ENCODE measurements at regions of chr1 and their contacts with region 1.

Region 1: GRCh38 chr1:94025383-94026340 is 95.3 kb downstream of the ABCA4 start:
- DNase-seq: peak; percentile 20
- ATAC-seq: peak; percentile 77
- H3K4me3 ChIP-seq: no peak overlapping the region
- H3K27ac ChIP-seq: no peak overlapping the region
- H3K4me1 ChIP-seq: no peaks in the 10 kb centered on the region
- H3K27me3 ChIP-seq: peaks cover 0 to 1% of the 10 kb centered on the region in 2 experiments; a peak in 2 of 4 replicates
- CTCF ChIP-seq: peak; percentile 52 to 73 (median 63); a peak in 5 of 6 replicates
- EP300 ChIP-seq: no peak
- POLR2A ChIP-seq: no peak
- RAD21 ChIP-seq: peak; percentile 83

Region 2: DNA sequence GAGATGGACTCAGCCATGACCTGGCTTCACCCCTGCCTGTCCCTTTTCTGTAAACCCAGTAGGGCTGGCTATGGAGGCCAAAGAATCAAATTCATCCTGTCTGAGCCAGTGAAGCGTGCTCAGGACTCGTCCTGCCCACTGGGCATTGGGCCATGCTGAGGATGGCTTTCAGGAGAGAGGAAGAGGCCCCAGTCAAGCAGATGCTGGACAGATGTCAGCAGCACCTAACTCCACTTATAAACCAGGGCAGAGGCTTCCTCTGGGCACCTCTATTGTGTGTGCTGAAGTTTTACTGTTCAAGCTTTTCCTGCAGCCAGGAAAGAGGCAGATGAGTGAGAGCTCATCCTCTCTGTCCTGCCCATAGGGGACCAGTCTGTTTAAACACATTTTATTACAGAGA is 19.1 kb before region 1 on chr1:
- CTCF ChIA-PET with region 1: interaction called, 12 read pairs
- POLR2A ChIA-PET with region 1: no interaction called
- RAD21 ChIA-PET with region 1: no interaction called
- SMC1A ChIA-PET with region 1: no interaction called
- in situ Hi-C with region 1: no loop called
- intact Hi-C with region 1: no loop called
- DNase-seq: no peak
- ATAC-seq: no peak
- H3K4me3 ChIP-seq: no peak overlapping the region
- H3K27ac ChIP-seq: no peak overlapping the region
- H3K4me1 ChIP-seq: no peaks in the 10 kb centered on the region
- H3K27me3 ChIP-seq: no peaks in the 10 kb centered on the region; a peak in 2 of 4 replicates
- CTCF ChIP-seq: no peak
- EP300 ChIP-seq: no peak
- POLR2A ChIP-seq: no peak
- RAD21 ChIP-seq: no peak

Region 3: GRCh38 chr1:94039514-94039870 is 13.8 kb after region 1 on chr1:
- CTCF ChIA-PET with region 1: interaction called, 152 read pairs
- POLR2A ChIA-PET with region 1: interaction called, 3 read pairs
- RAD21 ChIA-PET with region 1: interaction called, 6 read pairs
- SMC1A ChIA-PET with region 1: interaction called, 33 read pairs
- in situ Hi-C with region 1: no loop called
- intact Hi-C with region 1: no loop called
- DNase-seq: no peak
- ATAC-seq: peak; percentile 65
- H3K4me3 ChIP-seq: no peak overlapping the region
- H3K27ac ChIP-seq: no peak overlapping the region
- H3K4me1 ChIP-seq: peaks cover 6% of the 10 kb centered on the region; the same call in 1 of the 2 replicates
- H3K27me3 ChIP-seq: no peaks in the 10 kb centered on the region; a peak in 1 of 4 replicates
- CTCF ChIP-seq: peak; percentile 78 to 92 (median 86)
- EP300 ChIP-seq: no peak
- POLR2A ChIP-seq: no peak
- RAD21 ChIP-seq: peak; percentile 53

Region 4: GRCh38 chr1:94045465-94046056 is 19.9 kb after region 1 on chr1:
- CTCF ChIA-PET with region 1: interaction called, 152 read pairs
- POLR2A ChIA-PET with region 1: no interaction called
- RAD21 ChIA-PET with region 1: interaction called, 3 read pairs
- SMC1A ChIA-PET with region 1: no interaction called
- in situ Hi-C with region 1: no loop called
- intact Hi-C with region 1: no loop called
- DNase-seq: no peak
- ATAC-seq: peak; percentile 73
- H3K4me3 ChIP-seq: no peak overlapping the region
- H3K27ac ChIP-seq: no peak overlapping the region
- H3K4me1 ChIP-seq: no peaks in the 10 kb centered on the region
- H3K27me3 ChIP-seq: no peaks in the 10 kb centered on the region; a peak in 1 of 4 replicates
- CTCF ChIP-seq: peak; percentile 33 to 65 (median 45)
- EP300 ChIP-seq: no peak
- POLR2A ChIP-seq: no peak
- RAD21 ChIP-seq: peak; percentile 45

Region 5: DNA sequence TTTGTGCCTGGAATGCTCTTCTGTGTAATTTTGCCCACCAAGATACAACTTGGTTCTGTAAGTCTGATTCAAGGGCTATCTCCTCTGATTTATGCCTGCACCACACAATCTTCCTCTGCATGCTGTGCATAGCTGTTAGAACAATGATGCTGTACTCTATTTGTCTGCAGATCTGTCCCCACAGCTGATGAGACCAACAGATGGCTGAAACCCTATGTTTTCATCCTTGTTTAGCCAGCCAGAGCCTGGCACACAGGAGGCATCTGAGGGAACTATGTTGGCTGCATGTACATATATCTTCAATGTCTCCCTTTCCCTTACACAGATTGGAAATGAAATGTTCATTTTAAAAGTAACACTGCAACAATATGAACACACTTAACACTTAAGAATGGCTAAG is 153.2 kb after region 1 on chr1:
- CTCF ChIA-PET with region 1: no interaction called
- POLR2A ChIA-PET with region 1: no interaction called
- RAD21 ChIA-PET with region 1: no interaction called
- SMC1A ChIA-PET with region 1: no interaction called
- in situ Hi-C with region 1: no loop called
- intact Hi-C with region 1: no loop called
- DNase-seq: no peak
- ATAC-seq: no peak
- H3K4me3 ChIP-seq: no peak overlapping the region
- H3K27ac ChIP-seq: no peak overlapping the region
- H3K4me1 ChIP-seq: no peaks in the 10 kb centered on the region
- H3K27me3 ChIP-seq: no peaks in the 10 kb centered on the region; a peak in 2 of 4 replicates
- CTCF ChIP-seq: no peak
- EP300 ChIP-seq: no peak
- POLR2A ChIP-seq: no peak
- RAD21 ChIP-seq: no peak

Region 6: DNA sequence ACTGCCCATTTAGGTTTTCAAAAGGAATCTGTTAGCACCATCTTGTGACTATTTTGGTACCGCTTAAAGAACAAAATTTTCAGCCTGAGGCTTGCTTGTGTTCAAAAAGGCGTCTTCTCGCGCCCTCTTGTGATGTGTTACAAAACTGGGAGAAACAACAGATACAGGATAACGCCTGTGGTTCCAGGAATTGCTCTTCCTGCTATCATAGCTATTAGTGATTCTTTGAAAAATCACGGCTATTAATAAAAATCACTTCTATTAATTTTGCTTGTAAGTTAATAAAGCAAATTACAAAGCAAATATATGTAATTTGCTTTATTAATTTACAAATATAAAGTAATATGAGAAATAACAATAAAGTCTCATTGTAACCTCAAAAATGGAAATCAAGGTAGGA is 310.3 kb after region 1 on chr1:
- CTCF ChIA-PET with region 1: interaction called, 86 read pairs
- POLR2A ChIA-PET with region 1: interaction called, 4 read pairs
- RAD21 ChIA-PET with region 1: interaction called, 48 read pairs
- SMC1A ChIA-PET with region 1: interaction called, 44 read pairs
- in situ Hi-C with region 1: no loop called
- intact Hi-C with region 1: loop called (anchors 1 kb)
- DNase-seq: no peak
- ATAC-seq: peak; percentile 69
- H3K4me3 ChIP-seq: no peak overlapping the region
- H3K27ac ChIP-seq: no peak overlapping the region; the same call in 1 of the 2 replicates
- H3K4me1 ChIP-seq: peaks cover 23% of the 10 kb centered on the region
- H3K27me3 ChIP-seq: no peaks in the 10 kb centered on the region
- CTCF ChIP-seq: peak; percentile 61 to 82 (median 81)
- EP300 ChIP-seq: no peak
- POLR2A ChIP-seq: no peak
- RAD21 ChIP-seq: peak; percentile 93

Region 7: DNA sequence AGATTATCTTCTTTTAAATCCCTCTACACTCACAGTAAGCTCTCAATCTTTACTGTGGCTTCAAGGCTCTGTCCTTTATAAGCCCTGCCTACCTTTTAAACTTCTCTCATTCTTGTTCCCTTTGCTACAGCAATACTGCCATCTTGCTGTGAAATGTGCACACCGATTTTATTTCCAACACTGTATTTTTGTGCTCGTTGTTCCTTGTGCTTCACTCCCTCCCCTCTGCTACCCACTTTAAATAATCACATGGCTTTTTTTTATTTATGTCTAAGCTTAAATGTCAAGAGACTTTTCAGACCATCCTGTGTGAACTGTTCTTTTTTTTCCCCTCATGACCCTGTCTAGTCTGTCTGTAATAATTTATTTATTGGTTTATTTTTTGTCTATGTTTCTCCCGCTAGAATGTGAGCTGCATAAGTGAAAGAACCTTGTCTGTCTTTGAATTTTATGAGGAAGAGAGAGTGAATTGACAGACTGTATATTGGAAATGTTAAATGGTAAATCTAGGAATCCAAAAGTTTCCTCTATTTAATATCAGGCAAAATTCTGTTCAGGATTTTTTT is 438.2 kb after region 1 on chr1:
- CTCF ChIA-PET with region 1: interaction called, 12 read pairs
- POLR2A ChIA-PET with region 1: no interaction called
- RAD21 ChIA-PET with region 1: interaction called, 3 read pairs
- SMC1A ChIA-PET with region 1: interaction called, 10 read pairs
- in situ Hi-C with region 1: no loop called
- intact Hi-C with region 1: no loop called
- DNase-seq: no peak
- ATAC-seq: peak; percentile 68
- H3K4me3 ChIP-seq: no peak overlapping the region
- H3K27ac ChIP-seq: no peak overlapping the region
- H3K4me1 ChIP-seq: no peaks in the 10 kb centered on the region
- H3K27me3 ChIP-seq: no peaks in the 10 kb centered on the region
- CTCF ChIP-seq: peak; percentile 21 to 64 (median 49); a peak in 5 of 6 replicates
- EP300 ChIP-seq: no peak
- POLR2A ChIP-seq: no peak
- RAD21 ChIP-seq: peak; percentile 78